Tibial artery (tissue), 4 donors: ENCODE measurements at regions of chr4 and their contacts with region 1.

Region 1: GRCh38 chr4:56799824-56800756 is 21.4 kb downstream of the SPINK2 start:
- DNase-seq: peak; percentile 81 to 88
- H3K4me3 ChIP-seq: peak overlapping the region; percentile 57 to 64
- H3K27ac ChIP-seq: peak overlapping the region; percentile 69 to 80
- H3K4me1 ChIP-seq: peaks cover 0 to 3% (median 0%) of the 10 kb centered on the region in 4 donors
- H3K27me3 ChIP-seq: no peaks in the 10 kb centered on the region
- CTCF ChIP-seq: peak; percentile 81 to 84

Region 2: DNA sequence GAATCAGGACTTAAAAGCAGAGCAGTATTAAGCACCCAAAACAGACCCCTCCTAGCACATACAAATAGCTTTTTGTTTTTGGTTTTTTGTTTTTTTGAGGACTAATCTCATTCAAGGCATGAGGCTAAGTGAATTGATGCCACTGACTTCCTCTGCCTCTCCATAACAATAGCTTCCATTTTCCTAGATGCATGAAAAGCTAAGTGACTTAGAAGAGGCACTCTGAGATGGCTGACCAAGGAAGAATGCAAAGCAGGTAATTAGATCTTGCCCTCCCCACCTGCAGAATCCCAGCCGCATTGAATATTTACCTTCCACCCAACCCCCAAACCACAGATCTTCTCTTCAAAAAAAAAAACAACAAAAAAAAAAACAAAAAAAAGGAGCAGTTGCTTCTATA is 1667.3 kb before region 1 on chr4:
- intact Hi-C with region 1: no loop called
- DNase-seq: no peak
- H3K4me3 ChIP-seq: no peak overlapping the region
- H3K27ac ChIP-seq: no peak overlapping the region
- H3K4me1 ChIP-seq: peaks cover 0 to 10% (median 0%) of the 10 kb centered on the region in 4 donors
- H3K27me3 ChIP-seq: no peaks in the 10 kb centered on the region
- CTCF ChIP-seq: no peak

Region 3: DNA sequence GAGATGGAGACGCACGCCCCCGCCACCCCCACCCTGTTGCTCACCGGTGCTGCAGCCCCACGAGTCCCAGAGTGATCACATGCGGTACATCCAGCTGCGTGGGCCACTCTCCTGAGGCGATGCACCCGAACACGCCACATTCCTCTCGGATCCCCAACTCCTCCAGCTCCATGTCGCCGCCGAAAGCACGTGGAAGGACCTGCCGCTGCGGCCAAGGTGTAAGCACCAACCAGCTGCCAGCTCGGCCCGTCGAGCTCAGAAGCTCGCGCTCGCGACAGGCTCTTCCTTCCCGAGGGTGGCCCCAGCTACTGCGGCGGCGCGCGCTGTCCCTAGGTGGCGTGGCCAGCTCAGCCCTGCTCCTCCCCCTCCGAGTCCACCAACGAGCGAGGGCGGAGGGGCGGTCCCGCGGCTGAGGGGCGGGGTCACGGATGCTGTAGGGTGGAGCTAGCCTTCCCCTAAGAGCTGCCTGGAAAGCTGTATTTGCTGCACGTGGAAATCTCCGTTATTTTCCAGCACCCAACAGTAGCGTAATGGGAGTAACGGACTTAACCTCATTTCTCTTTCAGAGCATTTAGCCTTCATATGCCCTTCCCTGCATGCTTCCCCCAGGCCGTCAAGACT is 364.7 kb before region 1 on chr4 and contains the start of gene PPAT:
- intact Hi-C with region 1: loop called (anchors 10 kb)
- DNase-seq: peak; percentile 97 to 99
- H3K4me3 ChIP-seq: peak within 1 kb of the TSS; percentile 80 to 82
- H3K27ac ChIP-seq: peak within 1 kb of the TSS; percentile 84 to 92
- H3K4me1 ChIP-seq: peaks cover 0 to 22% (median 10%) of the 10 kb centered on the region in 4 donors
- H3K27me3 ChIP-seq: no peaks in the 10 kb centered on the region
- CTCF ChIP-seq: peak in 1 of 2 experiments; percentile 46

Region 4: GRCh38 chr4:56544573-56545131 is 255.4 kb before region 1 on chr4:
- intact Hi-C with region 1: loop called (anchors 10 kb)
- DNase-seq: peak; percentile 65 to 83
- H3K4me3 ChIP-seq: peak overlapping the region; percentile 36 to 45
- H3K27ac ChIP-seq: no peak overlapping the region
- H3K4me1 ChIP-seq: peaks cover 0 to 10% (median 3%) of the 10 kb centered on the region in 4 donors
- H3K27me3 ChIP-seq: no peaks in the 10 kb centered on the region
- CTCF ChIP-seq: peak; percentile 86 to 97

Region 5: GRCh38 chr4:56871371-56871866 is 71.3 kb after region 1 on chr4:
- intact Hi-C with region 1: no loop called
- DNase-seq: no peak
- H3K4me3 ChIP-seq: no peak overlapping the region
- H3K27ac ChIP-seq: no peak overlapping the region
- H3K4me1 ChIP-seq: no peaks in the 10 kb centered on the region
- H3K27me3 ChIP-seq: no peaks in the 10 kb centered on the region
- CTCF ChIP-seq: no peak